Activated CD4-positive, alpha-beta memory T cell treated with anti-CD3 and anti-CD28 coated beads for 36 hours (primary cell): ENCODE measurements at regions of chr3 and their contacts with region 1.

Region 1: GRCh38 chr3:106473576-106474475 is 605.0 kb upstream of the CBLB start:
- DNase-seq: peak; percentile 53
- H3K4me3 Mint-ChIP-seq: no peak overlapping the region
- H3K27ac Mint-ChIP-seq: peak overlapping the region; percentile 71
- H3K4me1 Mint-ChIP-seq: peaks cover 19% of the 10 kb centered on the region
- H3K27me3 Mint-ChIP-seq: no peaks in the 10 kb centered on the region

Region 2: DNA sequence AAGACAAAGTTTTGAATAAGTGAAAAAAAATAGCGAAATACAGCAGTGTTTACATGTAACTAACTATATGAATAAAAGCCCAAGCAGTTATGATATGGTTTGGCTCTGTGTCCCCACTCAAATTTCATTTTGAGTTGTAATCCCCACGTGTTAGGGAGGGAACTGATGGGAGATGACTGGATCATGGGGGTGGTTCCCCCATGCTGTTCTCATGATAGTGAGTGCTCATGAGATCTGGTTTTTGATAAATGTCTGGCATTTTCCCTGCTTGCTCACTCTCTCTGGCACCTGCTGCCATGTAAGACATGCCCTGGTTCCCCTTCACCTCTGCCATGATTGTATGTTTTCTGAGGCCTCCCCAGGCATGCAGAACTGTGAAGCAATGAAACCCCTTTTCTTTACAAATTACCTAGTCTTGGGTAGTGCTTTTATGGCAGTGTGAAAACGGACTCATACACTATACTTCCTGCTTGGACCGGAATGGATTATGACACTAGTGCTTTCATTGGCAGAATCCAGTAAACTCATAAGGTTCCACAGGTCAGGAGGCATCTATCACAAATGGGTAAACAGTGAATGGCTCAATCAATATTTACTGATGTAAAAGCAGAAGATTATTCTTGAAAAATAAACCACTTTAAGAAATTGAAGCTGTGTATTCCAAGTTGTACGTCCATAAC is 797.1 kb before region 1 on chr3:
- CTCF ChIA-PET with region 1: no interaction called
- POLR2A ChIA-PET with region 1: no interaction called
- intact Hi-C with region 1: loop called (anchors 1 kb)
- DNase-seq: peak; percentile 77
- H3K4me3 Mint-ChIP-seq: no peak overlapping the region
- H3K27ac Mint-ChIP-seq: peak overlapping the region; percentile 86
- H3K4me1 Mint-ChIP-seq: peaks cover 9% of the 10 kb centered on the region
- H3K27me3 Mint-ChIP-seq: no peaks in the 10 kb centered on the region

Region 3: DNA sequence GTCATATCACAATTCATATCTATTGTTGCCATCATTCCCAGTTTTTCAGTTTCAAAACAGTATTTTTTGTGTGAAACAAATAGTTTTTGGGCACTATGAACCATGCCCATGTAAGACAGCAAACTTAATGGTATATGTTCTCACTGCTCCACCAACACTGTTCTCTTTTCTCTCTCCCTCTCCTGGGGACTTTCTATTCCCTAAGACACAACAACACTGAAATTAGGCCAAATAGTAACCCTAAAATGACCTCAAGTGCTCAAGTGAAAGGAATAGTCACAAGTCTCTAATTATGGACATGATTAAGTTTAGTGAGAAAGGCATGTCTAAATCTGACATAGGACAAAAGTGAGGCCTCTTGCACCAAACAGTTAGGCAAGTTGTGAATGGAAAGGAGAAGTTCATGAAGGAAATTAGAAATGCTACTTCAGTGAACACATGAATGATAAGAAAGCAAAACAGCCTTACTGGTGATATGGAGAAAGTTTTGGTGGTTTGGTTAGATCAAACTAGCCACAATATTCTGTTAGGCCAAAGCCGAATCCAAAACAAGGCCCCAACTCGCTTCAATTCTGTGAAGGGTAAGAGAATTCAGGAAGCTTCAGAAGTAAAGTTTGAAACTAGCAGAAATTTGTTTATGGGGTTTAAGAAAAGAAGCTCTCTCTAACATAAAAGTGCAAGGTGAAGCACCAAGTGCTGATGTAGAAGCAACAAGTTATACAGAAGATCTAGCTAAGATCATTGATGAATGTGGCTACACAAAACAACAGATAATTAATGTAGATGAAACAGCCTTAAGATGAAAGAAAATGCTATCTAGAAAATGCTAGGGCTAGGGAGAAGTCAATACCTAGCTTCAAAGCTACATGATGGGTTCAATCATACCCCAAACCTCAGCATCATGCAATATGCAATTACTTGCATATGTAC is 709.2 kb before region 1 on chr3:
- CTCF ChIA-PET with region 1: no interaction called
- POLR2A ChIA-PET with region 1: no interaction called
- intact Hi-C with region 1: no loop called
- DNase-seq: no peak
- H3K4me3 Mint-ChIP-seq: peak overlapping the region; percentile 9
- H3K27ac Mint-ChIP-seq: peak overlapping the region; percentile 47
- H3K4me1 Mint-ChIP-seq: peaks cover 64% of the 10 kb centered on the region
- H3K27me3 Mint-ChIP-seq: no peaks in the 10 kb centered on the region

Region 4: DNA sequence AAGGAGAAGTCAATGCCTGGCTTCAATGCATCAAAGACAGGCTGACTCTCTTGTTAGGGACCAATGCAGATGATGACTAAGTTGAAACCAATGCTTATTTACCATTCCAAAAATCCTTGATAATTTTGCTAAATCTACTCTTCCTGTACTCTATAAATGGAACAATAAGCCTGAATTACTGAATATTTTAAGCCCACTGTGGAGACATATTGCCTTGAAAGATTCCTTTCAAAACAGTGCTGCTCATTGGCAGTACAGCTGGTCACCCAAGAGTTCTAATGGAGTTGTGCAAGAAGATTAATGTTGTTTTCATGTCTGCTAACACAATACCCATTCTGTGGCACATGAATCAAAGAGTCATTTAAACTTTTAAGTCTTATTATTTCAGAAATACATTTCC is 424.0 kb before region 1 on chr3:
- CTCF ChIA-PET with region 1: no interaction called
- POLR2A ChIA-PET with region 1: no interaction called
- intact Hi-C with region 1: loop called (anchors 1 kb)
- DNase-seq: no peak
- H3K4me3 Mint-ChIP-seq: no peak overlapping the region
- H3K27ac Mint-ChIP-seq: peak overlapping the region; percentile 77
- H3K4me1 Mint-ChIP-seq: peaks cover 14% of the 10 kb centered on the region
- H3K27me3 Mint-ChIP-seq: no peaks in the 10 kb centered on the region

Region 5: DNA sequence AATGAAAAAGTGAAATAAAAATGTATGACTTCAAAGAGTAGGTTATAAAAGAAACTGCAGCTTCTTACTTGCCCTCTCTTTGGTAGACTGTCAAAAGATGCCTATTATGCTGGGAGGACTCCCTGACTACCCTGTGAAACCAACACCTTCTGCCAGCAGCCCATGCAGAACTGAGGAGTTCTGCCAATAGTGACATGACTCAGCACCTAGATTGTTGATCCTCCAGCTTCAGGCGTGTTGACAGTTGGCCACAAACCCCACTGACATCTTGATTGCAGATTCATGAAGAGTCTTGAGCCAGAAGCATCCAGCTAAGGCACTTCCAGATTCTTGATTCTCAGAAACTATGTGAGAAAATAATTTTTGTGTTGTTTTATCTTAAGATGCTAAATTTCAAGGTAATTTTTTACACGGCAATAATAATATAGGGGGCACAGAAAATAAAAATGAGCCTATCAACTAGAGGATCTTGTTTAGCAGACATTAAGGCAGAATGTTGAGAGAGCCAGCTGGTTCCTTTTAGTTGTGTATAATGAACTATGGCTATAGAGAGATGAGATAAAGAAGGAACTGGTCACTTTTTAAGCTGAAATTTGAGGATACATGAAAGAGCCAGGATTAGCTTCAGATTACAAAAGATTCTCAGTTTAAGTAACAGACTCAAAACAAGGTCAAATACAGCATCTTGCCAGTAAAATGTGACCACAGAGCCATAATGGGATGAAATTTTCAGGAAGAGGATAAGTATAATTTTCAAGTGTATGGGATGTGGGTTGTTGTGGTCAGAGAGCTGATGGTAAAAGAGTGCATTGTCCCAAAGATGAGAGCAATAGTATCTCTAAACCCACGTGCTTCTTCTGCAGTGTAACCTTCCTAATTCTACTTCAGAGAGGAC is 16.3 kb before region 1 on chr3:
- CTCF ChIA-PET with region 1: no interaction called
- POLR2A ChIA-PET with region 1: no interaction called
- intact Hi-C with region 1: loop called (anchors 1 kb)
- DNase-seq: peak; percentile 56
- H3K4me3 Mint-ChIP-seq: no peak overlapping the region
- H3K27ac Mint-ChIP-seq: peak overlapping the region; percentile 36
- H3K4me1 Mint-ChIP-seq: peaks cover 17% of the 10 kb centered on the region
- H3K27me3 Mint-ChIP-seq: no peaks in the 10 kb centered on the region

Region 6: DNA sequence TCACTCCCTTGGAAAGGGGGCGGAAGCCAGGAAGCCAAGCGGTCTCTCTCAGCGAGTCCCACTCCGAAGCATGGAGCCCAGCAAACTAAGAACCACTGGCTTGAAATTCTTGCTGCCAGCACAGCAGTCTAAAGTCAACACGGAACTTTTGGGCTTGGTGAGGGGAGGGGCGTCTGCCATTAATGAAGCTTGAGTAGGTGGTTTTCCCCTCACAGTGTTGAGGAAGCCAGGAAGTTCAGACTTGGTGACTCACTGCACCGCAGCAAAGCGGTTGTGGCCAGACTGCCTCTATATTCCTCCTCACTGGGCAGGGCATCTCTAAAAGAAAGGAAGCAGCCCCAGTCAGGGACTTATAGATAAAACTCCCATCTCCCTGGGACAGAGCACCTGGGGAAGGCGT is 60.4 kb after region 1 on chr3:
- CTCF ChIA-PET with region 1: interaction called, 3 read pairs
- POLR2A ChIA-PET with region 1: no interaction called
- intact Hi-C with region 1: loop called (anchors 1 kb)
- DNase-seq: peak; percentile 81
- H3K4me3 Mint-ChIP-seq: peak overlapping the region; percentile 7
- H3K27ac Mint-ChIP-seq: peak overlapping the region; percentile 80
- H3K4me1 Mint-ChIP-seq: peaks cover 27% of the 10 kb centered on the region
- H3K27me3 Mint-ChIP-seq: no peaks in the 10 kb centered on the region